ENCODE measurements at regions of chr1 and their contacts with region 1.

Region 1: DNA sequence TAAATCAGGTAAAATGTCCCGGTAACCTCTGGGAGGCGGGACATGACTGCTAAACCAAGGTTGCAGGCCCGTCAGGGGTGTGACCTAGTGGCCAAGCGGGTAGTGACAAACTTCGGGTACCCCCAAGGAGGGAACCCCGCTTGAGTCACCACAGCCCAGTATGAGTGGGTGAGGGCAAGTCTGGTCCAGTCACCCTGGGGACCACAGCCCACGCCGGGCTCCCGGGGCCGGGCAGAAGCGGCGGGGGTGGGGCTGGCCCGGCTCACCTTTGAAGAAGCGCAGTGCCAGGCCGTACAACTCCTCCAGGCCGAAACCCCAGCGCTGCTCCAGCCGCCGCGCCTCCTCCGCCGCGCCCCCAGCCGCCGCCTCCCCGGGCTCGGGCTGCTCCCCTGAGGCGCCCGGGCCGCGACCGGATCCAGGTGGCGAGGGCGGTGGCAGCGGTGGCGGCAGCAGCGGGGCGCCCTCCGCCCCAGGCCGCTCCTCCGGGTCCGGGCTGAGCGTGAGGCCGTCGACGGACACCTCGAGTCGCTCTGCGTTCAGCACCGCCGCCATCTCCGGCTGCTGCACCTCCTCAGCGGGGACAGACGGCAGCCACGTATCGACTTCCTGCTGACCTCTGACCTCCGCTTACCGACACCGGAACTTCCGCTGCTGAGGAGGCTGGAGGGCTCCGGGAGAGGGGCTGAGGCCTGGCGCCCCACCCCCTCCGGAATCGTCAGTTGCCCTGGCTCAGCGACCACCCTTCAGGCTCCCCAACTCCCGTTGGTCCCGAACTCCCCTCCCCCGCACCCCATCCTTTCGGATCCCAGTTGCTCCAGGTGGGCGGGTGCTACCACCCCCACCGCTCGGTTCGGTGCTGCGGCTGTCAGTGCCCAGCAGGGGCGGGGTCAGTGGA is at the start of gene ACBD3:
- DNase-seq: peak; percentile 96
- H3K4me3 Mint-ChIP-seq: peak within 1 kb of the TSS; percentile 97
- H3K27ac Mint-ChIP-seq: peak within 1 kb of the TSS; percentile 92
- H3K4me1 Mint-ChIP-seq: peaks cover 29% of the 10 kb centered on the region
- H3K27me3 Mint-ChIP-seq: no peaks in the 10 kb centered on the region
- total RNA-seq, gene ACBD3: 21.8 and 23.9 TPM in 2 replicates

Region 2: GRCh38 chr1:226100436-226101391 is 85.7 kb before region 1 on chr1:
- intact Hi-C with region 1: no loop called
- DNase-seq: peak; percentile 80
- H3K4me3 Mint-ChIP-seq: peak overlapping the region; percentile 81
- H3K27ac Mint-ChIP-seq: peak overlapping the region; percentile 3
- H3K4me1 Mint-ChIP-seq: peaks cover 15% of the 10 kb centered on the region
- H3K27me3 Mint-ChIP-seq: peaks cover 16% of the 10 kb centered on the region

Region 3: GRCh38 chr1:226308723-226309315 is 122.4 kb after region 1 on chr1 and contains the start of gene LIN9:
- intact Hi-C with region 1: loop called (anchors 2 kb)
- DNase-seq: peak; percentile 98
- H3K4me3 Mint-ChIP-seq: peak within 1 kb of the TSS; percentile 91
- H3K27ac Mint-ChIP-seq: peak within 1 kb of the TSS; percentile 89
- H3K4me1 Mint-ChIP-seq: peaks cover 31% of the 10 kb centered on the region
- H3K27me3 Mint-ChIP-seq: peaks cover 20% of the 10 kb centered on the region
- total RNA-seq, gene LIN9: 10.5 and 13.8 TPM in 2 replicates

Measured in activated CD4-positive, alpha-beta T cell treated with anti-CD3 and anti-CD28 coated beads, Interleukin-2, amount 10 ng/mL, durations not matched to agents 24 days and 14 days (primary cell).